Dorsolateral prefrontal cortex (tissue), 120 donors: ENCODE measurements at regions of chr2 and their contacts with region 1.

Region 1: GRCh38 chr2:9142551-9143263 is 63.9 kb upstream of the ASAP2 start:
- DNase-seq: peak; percentile 59 to 91 (median 80)
- H3K4me3 ChIP-seq: peak overlapping the region in 57 of 59 donors; percentile 4 to 64 (median 38)
- H3K27ac ChIP-seq: peak overlapping the region in 12 of 59 donors; percentile 13 to 65 (median 52)
- H3K27me3 ChIP-seq: no peaks in the 10 kb centered on the region
- CTCF ChIP-seq: peak; percentile 98 to 100 (median 100)

Region 2: GRCh38 chr2:9003616-9004337 is 138.9 kb before region 1 on chr2 and contains the start of gene MBOAT2:
- intact Hi-C with region 1: loop called in 1 of 2 experiments (anchors 2 kb)
- DNase-seq: peak; percentile 77 to 94 (median 84)
- H3K4me3 ChIP-seq: peak within 1 kb of the TSS; percentile 66 to 98 (median 89)
- H3K27ac ChIP-seq: peak within 1 kb of the TSS; percentile 71 to 99 (median 96)
- H3K27me3 ChIP-seq: no peaks in the 10 kb centered on the region
- CTCF ChIP-seq: peak in 3 of 56 donors; percentile 9 to 16 (median 10)
- total RNA-seq, gene MBOAT2: 52.5 to 138 (median 83.9) TPM

Region 3: GRCh38 chr2:9205963-9206948 is 63.5 kb after region 1 on chr2 and contains the start of gene ASAP2:
- intact Hi-C with region 1: loop called (anchors 1 to 2 kb)
- DNase-seq: peak; percentile 47 to 82 (median 64)
- H3K4me3 ChIP-seq: peak within 1 kb of the TSS; percentile 63 to 91 (median 83)
- H3K27ac ChIP-seq: peak within 1 kb of the TSS in 58 of 59 donors; percentile 9 to 89 (median 79)
- H3K27me3 ChIP-seq: no peaks in the 10 kb centered on the region
- CTCF ChIP-seq: peak; percentile 46 to 93 (median 79)
- total RNA-seq, gene ASAP2: 30.8 to 63.8 (median 48.4) TPM

Region 4: DNA sequence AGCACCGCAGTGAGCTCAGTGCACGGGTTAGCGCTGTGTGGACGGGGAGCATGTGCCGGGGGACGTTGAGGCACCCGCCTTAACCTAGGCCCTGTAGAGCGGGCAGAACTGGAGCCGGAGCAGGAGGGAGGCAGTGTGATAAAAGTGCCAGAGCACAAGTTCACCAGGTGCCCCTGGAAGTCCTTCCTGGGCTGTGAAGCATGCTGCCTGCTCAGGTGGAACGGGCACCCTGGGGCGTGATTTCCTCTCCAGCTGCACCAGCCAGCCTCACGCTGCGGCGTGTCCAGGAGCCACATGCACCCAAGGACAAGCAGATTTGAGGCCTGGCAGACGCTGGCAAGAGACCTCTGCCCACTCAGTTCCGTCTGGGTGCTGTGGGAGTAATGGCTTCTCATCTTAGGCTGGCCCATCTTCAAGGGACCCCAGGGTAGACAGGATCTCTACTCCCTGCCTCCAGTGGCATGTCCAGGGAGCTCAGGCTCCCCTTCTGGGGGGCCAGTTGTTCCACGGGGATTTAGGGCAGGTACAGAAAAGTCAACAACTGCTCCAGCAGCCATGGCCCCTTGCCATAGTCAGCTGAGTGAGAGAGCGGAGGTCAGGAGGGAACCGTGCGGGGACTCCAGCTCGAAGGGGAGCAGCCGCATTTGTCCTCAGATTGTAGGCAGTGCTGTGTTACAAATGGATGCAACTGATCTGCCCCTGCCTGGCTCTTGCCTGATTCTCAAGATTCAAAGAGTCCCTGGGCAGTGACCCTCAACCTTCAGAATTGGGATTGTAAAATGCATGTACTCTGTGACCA is 230.6 kb after region 1 on chr2:
- intact Hi-C with region 1: loop called (anchors 1 to 5 kb)
- DNase-seq: no peak
- H3K4me3 ChIP-seq: no peak overlapping the region
- H3K27ac ChIP-seq: no peak overlapping the region
- H3K27me3 ChIP-seq: no peaks in the 10 kb centered on the region
- CTCF ChIP-seq: no peak

Region 5: GRCh38 chr2:9555297-9556141 is 412.8 kb after region 1 on chr2 and contains the start of gene ADAM17:
- intact Hi-C with region 1: loop called in 1 of 2 experiments (anchors 10 kb)
- DNase-seq: peak; percentile 75 to 96 (median 91)
- H3K4me3 ChIP-seq: peak within 1 kb of the TSS; percentile 65 to 99 (median 93)
- H3K27ac ChIP-seq: peak within 1 kb of the TSS; percentile 75 to 99 (median 97)
- H3K27me3 ChIP-seq: no peaks in the 10 kb centered on the region
- CTCF ChIP-seq: peak in 55 of 56 donors; percentile 19 to 84 (median 66)
- total RNA-seq, gene ADAM17: 20.3 to 43.9 (median 31.0) TPM